Activated CD8-positive, alpha-beta T cell treated with anti-CD3 and anti-CD28 coated beads, Interleukin-2, amount 10 ng/mL, durations not matched to agents 7 days and 5 days (primary cell): ENCODE measurements at regions of chr15 and their contacts with region 1.

Region 1: DNA sequence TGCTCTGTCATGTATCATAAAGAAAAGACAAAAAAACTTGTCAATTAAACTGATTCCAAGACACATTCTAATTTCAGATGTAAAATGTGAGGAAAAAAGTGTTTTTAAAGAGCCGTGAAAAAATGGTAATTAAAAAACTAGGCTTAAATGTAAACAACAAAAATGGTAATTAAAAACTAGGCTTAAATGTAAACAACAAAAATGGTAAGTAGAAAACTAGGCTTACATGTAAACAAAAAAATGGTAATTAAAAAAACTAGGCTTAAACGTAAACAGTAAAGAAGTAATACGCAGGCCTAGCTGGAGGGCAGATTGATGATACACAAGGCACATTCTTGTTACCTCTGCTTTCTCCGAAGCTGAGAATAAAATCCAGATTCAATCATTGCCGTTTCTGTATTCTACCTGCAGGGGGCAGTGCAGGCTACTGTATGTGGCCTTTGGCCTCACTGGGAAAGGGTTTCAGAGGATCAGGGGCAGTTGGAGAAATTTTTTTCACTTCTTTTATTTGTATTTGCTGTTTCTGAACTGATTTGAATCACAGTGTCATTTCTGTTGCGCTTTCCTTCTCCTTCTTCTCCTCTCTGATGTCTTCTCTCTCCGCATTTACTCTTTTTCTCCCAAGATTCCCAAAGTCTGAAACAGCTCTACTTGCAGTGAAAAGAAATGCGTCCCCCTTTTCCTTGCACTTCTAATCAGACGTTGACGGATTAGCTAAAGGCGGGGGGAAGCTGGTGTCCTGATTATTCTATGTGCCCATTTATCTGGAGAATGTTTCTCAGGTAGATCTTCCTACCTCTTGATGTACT is 67.2 kb upstream of the MCTP2 start:
- DNase-seq: peak; percentile 77
- ATAC-seq: no peak
- H3K4me3 Mint-ChIP-seq: no peak overlapping the region
- H3K27ac Mint-ChIP-seq: no peak overlapping the region
- H3K4me1 Mint-ChIP-seq: peaks cover 7% of the 10 kb centered on the region
- H3K27me3 Mint-ChIP-seq: peaks cover 18% of the 10 kb centered on the region

Region 2: GRCh38 chr15:94225616-94226015 is 61.4 kb after region 1 on chr15:
- CTCF ChIA-PET with region 1: interaction called, 35 read pairs
- POLR2A ChIA-PET with region 1: no interaction called
- DNase-seq: no peak
- ATAC-seq: no peak
- H3K4me3 Mint-ChIP-seq: no peak overlapping the region
- H3K27ac Mint-ChIP-seq: no peak overlapping the region
- H3K4me1 Mint-ChIP-seq: peaks cover 31% of the 10 kb centered on the region
- H3K27me3 Mint-ChIP-seq: peaks cover 18% of the 10 kb centered on the region

Region 3: GRCh38 chr15:94287794-94288246 is 123.6 kb after region 1 on chr15:
- CTCF ChIA-PET with region 1: interaction called, 21 read pairs
- POLR2A ChIA-PET with region 1: no interaction called
- DNase-seq: peak; percentile 77
- ATAC-seq: peak; percentile 95
- H3K4me3 Mint-ChIP-seq: peak overlapping the region; percentile 66
- H3K27ac Mint-ChIP-seq: peak overlapping the region; percentile 72
- H3K4me1 Mint-ChIP-seq: peaks cover 52% of the 10 kb centered on the region
- H3K27me3 Mint-ChIP-seq: no peaks in the 10 kb centered on the region

Region 4: GRCh38 chr15:94335616-94336015 is 171.4 kb after region 1 on chr15:
- CTCF ChIA-PET with region 1: interaction called, 56 read pairs
- POLR2A ChIA-PET with region 1: no interaction called
- DNase-seq: no peak
- ATAC-seq: no peak
- H3K4me3 Mint-ChIP-seq: no peak overlapping the region
- H3K27ac Mint-ChIP-seq: no peak overlapping the region
- H3K4me1 Mint-ChIP-seq: no peaks in the 10 kb centered on the region
- H3K27me3 Mint-ChIP-seq: no peaks in the 10 kb centered on the region